ENCODE measurements at regions of chr20 and their contacts with region 1.

Region 1: GRCh38 chr20:19583532-19584175 is 174.4 kb upstream of the RIN2 start:
- DNase-seq: peak; percentile 56 to 70 (median 62)
- ATAC-seq: peak; percentile 92
- H3K4me3 ChIP-seq: no peak overlapping the region
- H3K27ac ChIP-seq: no peak overlapping the region
- H3K4me1 ChIP-seq: no peaks in the 10 kb centered on the region
- H3K27me3 ChIP-seq: no peaks in the 10 kb centered on the region; a peak in 1 of 5 replicates
- CTCF ChIP-seq: peak; percentile 62 to 81 (median 65)
- EP300 ChIP-seq: no peak
- POLR2A ChIP-seq: no peak
- RAD21 ChIP-seq: peak; percentile 47 to 72

Region 2: GRCh38 chr20:18412221-18412901 is 1171.3 kb before region 1 on chr20:
- CTCF ChIA-PET with region 1: no interaction called
- POLR2A ChIA-PET with region 1: no interaction called
- in situ Hi-C with region 1: no loop called
- intact Hi-C with region 1: loop called (anchors 10 kb)
- DNase-seq: no peak
- ATAC-seq: no peak
- H3K4me3 ChIP-seq: no peak overlapping the region
- H3K27ac ChIP-seq: no peak overlapping the region
- H3K4me1 ChIP-seq: no peaks in the 10 kb centered on the region
- H3K27me3 ChIP-seq: peaks cover 0 to 7% of the 10 kb centered on the region in 2 experiments; a peak in 2 of 5 replicates
- CTCF ChIP-seq: no peak
- EP300 ChIP-seq: no peak
- POLR2A ChIP-seq: no peak
- RAD21 ChIP-seq: no peak

Region 3: GRCh38 chr20:18839507-18840247 is 744.0 kb before region 1 on chr20:
- CTCF ChIA-PET with region 1: no interaction called
- POLR2A ChIA-PET with region 1: no interaction called
- in situ Hi-C with region 1: no loop called
- intact Hi-C with region 1: no loop called
- DNase-seq: no peak
- ATAC-seq: no peak
- H3K4me3 ChIP-seq: no peak overlapping the region
- H3K27ac ChIP-seq: no peak overlapping the region
- H3K4me1 ChIP-seq: no peaks in the 10 kb centered on the region
- H3K27me3 ChIP-seq: no peaks in the 10 kb centered on the region
- CTCF ChIP-seq: no peak
- EP300 ChIP-seq: no peak
- POLR2A ChIP-seq: no peak
- RAD21 ChIP-seq: no peak

Region 4: GRCh38 chr20:19205977-19206396 is 377.7 kb before region 1 on chr20:
- CTCF ChIA-PET with region 1: interaction called, 8 read pairs
- POLR2A ChIA-PET with region 1: no interaction called
- in situ Hi-C with region 1: loop called (anchors 25 kb)
- intact Hi-C with region 1: loop called (anchors 2 kb)
- DNase-seq: peak; percentile 43 to 56 (median 48)
- ATAC-seq: peak; percentile 80
- H3K4me3 ChIP-seq: no peak overlapping the region
- H3K27ac ChIP-seq: no peak overlapping the region
- H3K4me1 ChIP-seq: no peaks in the 10 kb centered on the region
- H3K27me3 ChIP-seq: no peaks in the 10 kb centered on the region
- CTCF ChIP-seq: peak; percentile 63 to 80 (median 70)
- EP300 ChIP-seq: no peak
- POLR2A ChIP-seq: no peak
- RAD21 ChIP-seq: peak; percentile 53 to 67

Measured in K562 (cell line).